Caco-2 (cell line): ENCODE measurements at regions of chr9 and their contacts with region 1.

Region 1: GRCh38 chr9:134325817-134326723 is at the start of gene RXRA:
- DNase-seq: peak; percentile 90 to 93
- H3K4me3 ChIP-seq: peak within 1 kb of the TSS; percentile 93
- H3K4me3 Mint-ChIP-seq: peak within 1 kb of the TSS; percentile 74
- H3K27ac Mint-ChIP-seq: peak within 1 kb of the TSS; percentile 66
- H3K4me1 ChIP-seq: peaks cover 53% of the 10 kb centered on the region
- H3K4me1 Mint-ChIP-seq: peaks cover 20% of the 10 kb centered on the region
- H3K27me3 ChIP-seq: no peaks in the 10 kb centered on the region
- H3K27me3 Mint-ChIP-seq: no peaks in the 10 kb centered on the region
- CTCF ChIP-seq: peak in 1 of 2 experiments; percentile 46
- total RNA-seq, gene RXRA: 63.8 and 69.1 TPM in 2 replicates

Region 2: GRCh38 chr9:134067904-134068743 is 257.9 kb before region 1 on chr9 and contains the start of gene BRD3:
- CTCF ChIA-PET with region 1: no interaction called
- POLR2A ChIA-PET with region 1: no interaction called
- intact Hi-C with region 1: loop called (anchors 5 kb)
- DNase-seq: peak; percentile 83 to 90
- H3K4me3 ChIP-seq: peak within 1 kb of the TSS; percentile 74
- H3K4me3 Mint-ChIP-seq: peak within 1 kb of the TSS; percentile 79
- H3K27ac Mint-ChIP-seq: peak within 1 kb of the TSS; percentile 48
- H3K4me1 ChIP-seq: peaks cover 12% of the 10 kb centered on the region
- H3K4me1 Mint-ChIP-seq: no peaks in the 10 kb centered on the region
- H3K27me3 ChIP-seq: no peaks in the 10 kb centered on the region
- H3K27me3 Mint-ChIP-seq: peaks cover 10% of the 10 kb centered on the region
- CTCF ChIP-seq: peak in 1 of 2 experiments; percentile 9
- total RNA-seq, gene BRD3: 57.5 and 58.3 TPM in 2 replicates

Region 3: GRCh38 chr9:134171316-134172197 is 154.5 kb before region 1 on chr9:
- CTCF ChIA-PET with region 1: interaction called, 4 read pairs
- POLR2A ChIA-PET with region 1: no interaction called
- intact Hi-C with region 1: loop called (anchors 2 kb)
- DNase-seq: no peak
- H3K4me3 ChIP-seq: no peak overlapping the region
- H3K4me3 Mint-ChIP-seq: no peak overlapping the region
- H3K27ac Mint-ChIP-seq: no peak overlapping the region
- H3K4me1 ChIP-seq: no peaks in the 10 kb centered on the region
- H3K4me1 Mint-ChIP-seq: peaks cover 6% of the 10 kb centered on the region
- H3K27me3 ChIP-seq: no peaks in the 10 kb centered on the region
- H3K27me3 Mint-ChIP-seq: no peaks in the 10 kb centered on the region
- CTCF ChIP-seq: no peak

Region 4: GRCh38 chr9:134182554-134183085 is 143.4 kb before region 1 on chr9:
- CTCF ChIA-PET with region 1: no interaction called
- POLR2A ChIA-PET with region 1: no interaction called
- intact Hi-C with region 1: no loop called
- DNase-seq: peak in 1 of 2 experiments; percentile 12
- H3K4me3 ChIP-seq: no peak overlapping the region
- H3K4me3 Mint-ChIP-seq: no peak overlapping the region
- H3K27ac Mint-ChIP-seq: peak overlapping the region; percentile 6
- H3K4me1 ChIP-seq: no peaks in the 10 kb centered on the region
- H3K4me1 Mint-ChIP-seq: peaks cover 6% of the 10 kb centered on the region
- H3K27me3 ChIP-seq: no peaks in the 10 kb centered on the region
- H3K27me3 Mint-ChIP-seq: peaks cover 5% of the 10 kb centered on the region
- CTCF ChIP-seq: no peak

Region 5: DNA sequence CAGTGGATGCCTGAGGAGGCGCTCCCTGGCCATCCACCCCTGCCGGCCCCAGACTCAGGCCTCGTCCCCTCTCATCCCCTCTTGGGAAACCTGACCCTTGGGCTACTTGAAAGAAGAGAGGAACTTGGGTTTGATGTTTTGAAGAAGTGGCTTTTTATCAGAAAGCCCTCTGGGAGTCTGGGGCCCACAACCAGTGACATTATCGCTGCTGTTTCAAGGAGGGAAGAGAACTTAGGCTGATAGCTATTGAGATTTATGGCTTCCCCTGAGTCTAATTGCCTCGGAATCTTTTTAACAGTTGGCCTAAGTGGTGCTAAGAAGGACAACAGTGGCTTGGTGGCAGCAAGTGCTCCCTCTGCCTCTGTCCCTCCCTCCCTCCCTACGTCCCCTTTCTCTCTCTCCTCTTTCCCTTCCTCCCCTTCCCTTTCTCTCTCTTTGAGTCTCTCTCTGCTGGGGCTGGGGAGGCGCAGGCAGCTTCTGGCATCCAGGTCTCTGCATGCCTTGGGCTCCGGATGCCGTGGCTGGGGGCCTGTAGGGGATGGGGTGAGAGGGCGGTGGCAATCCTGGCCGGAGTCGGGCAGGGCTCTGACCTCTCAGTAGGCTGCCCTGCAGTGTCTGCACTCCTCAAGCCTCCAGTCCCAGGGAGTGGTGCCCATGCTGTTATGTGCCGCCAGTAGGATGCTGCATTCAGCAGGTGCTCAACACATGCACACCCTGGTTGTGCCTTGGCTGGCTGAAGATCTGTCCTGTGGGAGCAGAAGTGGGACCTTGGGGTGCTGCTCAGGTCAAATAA is 49.4 kb before region 1 on chr9:
- CTCF ChIA-PET with region 1: no interaction called
- POLR2A ChIA-PET with region 1: no interaction called
- intact Hi-C with region 1: loop called (anchors 5 kb)
- DNase-seq: no peak
- H3K4me3 ChIP-seq: no peak overlapping the region
- H3K4me3 Mint-ChIP-seq: no peak overlapping the region
- H3K27ac Mint-ChIP-seq: no peak overlapping the region
- H3K4me1 ChIP-seq: no peaks in the 10 kb centered on the region
- H3K4me1 Mint-ChIP-seq: no peaks in the 10 kb centered on the region
- H3K27me3 ChIP-seq: no peaks in the 10 kb centered on the region
- H3K27me3 Mint-ChIP-seq: no peaks in the 10 kb centered on the region
- CTCF ChIP-seq: no peak

Region 6: GRCh38 chr9:134356570-134357504 is 30.8 kb after region 1 on chr9:
- CTCF ChIA-PET with region 1: interaction called, 5 read pairs
- POLR2A ChIA-PET with region 1: interaction called, 5 read pairs
- intact Hi-C with region 1: loop called (anchors 1 kb)
- DNase-seq: peak; percentile 90
- H3K4me3 ChIP-seq: no peak overlapping the region
- H3K4me3 Mint-ChIP-seq: peak overlapping the region; percentile 27
- H3K27ac Mint-ChIP-seq: peak overlapping the region; percentile 86
- H3K4me1 ChIP-seq: peaks cover 51% of the 10 kb centered on the region
- H3K4me1 Mint-ChIP-seq: peaks cover 22% of the 10 kb centered on the region
- H3K27me3 ChIP-seq: no peaks in the 10 kb centered on the region
- H3K27me3 Mint-ChIP-seq: no peaks in the 10 kb centered on the region
- CTCF ChIP-seq: no peak

Region 7: DNA sequence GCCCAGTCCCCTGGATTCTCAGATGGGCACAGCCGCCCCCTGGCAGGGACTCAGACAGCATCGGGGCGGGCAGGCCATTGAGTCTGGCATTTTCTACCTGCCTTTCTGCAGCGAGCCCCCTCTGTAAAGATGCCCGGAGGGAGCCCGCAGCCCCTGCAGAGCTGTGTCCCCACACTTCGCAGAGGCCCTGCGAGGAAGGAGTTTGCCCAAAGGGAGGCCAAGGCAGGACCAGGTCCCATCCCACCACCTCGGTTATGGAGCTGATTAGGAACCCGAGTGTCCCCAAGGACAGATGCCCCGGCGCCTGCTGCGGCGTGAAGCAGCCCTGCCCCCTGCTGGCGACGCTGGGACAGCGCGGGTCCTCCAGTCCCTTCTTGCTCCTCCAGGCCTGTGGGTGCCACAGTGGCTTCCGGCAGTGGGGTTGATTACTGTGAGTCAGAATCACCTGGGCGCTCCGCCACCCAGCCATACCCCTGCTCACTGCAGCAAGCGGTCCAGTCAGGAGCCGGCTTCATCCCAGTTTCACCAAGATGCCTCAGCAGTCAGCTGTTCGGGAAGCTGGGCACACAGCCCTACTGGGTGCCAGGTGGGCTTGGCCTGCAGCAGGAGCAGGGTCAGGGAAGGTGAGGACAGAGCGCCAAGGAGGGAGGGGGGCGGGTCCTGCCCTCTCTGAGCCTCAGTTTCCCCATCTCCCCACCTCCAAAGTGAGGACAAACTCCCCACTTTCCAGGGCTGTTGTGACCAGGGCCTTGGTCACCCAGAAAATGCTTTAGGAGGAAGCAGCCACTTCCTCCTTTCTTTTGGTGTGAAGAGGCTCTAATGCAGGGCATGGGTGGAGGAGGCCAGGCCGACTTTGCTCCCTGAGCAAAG is 117.3 kb after region 1 on chr9:
- CTCF ChIA-PET with region 1: interaction called, 5 read pairs
- POLR2A ChIA-PET with region 1: no interaction called
- intact Hi-C with region 1: loop called (anchors 5 kb)
- DNase-seq: peak; percentile 84 to 85
- H3K4me3 ChIP-seq: no peak overlapping the region
- H3K4me3 Mint-ChIP-seq: no peak overlapping the region
- H3K27ac Mint-ChIP-seq: no peak overlapping the region
- H3K4me1 ChIP-seq: 0 out of 2 replicates have a peak, but pooled peaks cover 2% of the 10 kb centered on the region
- H3K4me1 Mint-ChIP-seq: no peaks in the 10 kb centered on the region
- H3K27me3 ChIP-seq: no peaks in the 10 kb centered on the region
- H3K27me3 Mint-ChIP-seq: no peaks in the 10 kb centered on the region
- CTCF ChIP-seq: peak; percentile 93 to 97